ENCODE measurements at regions of chr15 and their contacts with region 1.

Region 1: GRCh38 chr15:26615188-26615926 is 157.5 kb downstream of the GABRB3 start:
- DNase-seq: no peak
- H3K4me3 ChIP-seq: no peak overlapping the region
- H3K27ac ChIP-seq: no peak overlapping the region
- H3K4me1 ChIP-seq: no peaks in the 10 kb centered on the region
- H3K27me3 ChIP-seq: no peaks in the 10 kb centered on the region
- CTCF ChIP-seq: no peak
- POLR2A ChIP-seq: no peak

Region 2: GRCh38 chr15:26340376-26340775 is 275.0 kb before region 1 on chr15:
- intact Hi-C with region 1: no loop called
- DNase-seq: no peak
- H3K4me3 ChIP-seq: no peak overlapping the region
- H3K27ac ChIP-seq: no peak overlapping the region
- H3K4me1 ChIP-seq: no peaks in the 10 kb centered on the region
- H3K27me3 ChIP-seq: no peaks in the 10 kb centered on the region
- CTCF ChIP-seq: no peak
- POLR2A ChIP-seq: no peak

Region 3: GRCh38 chr15:26551473-26551872 is 63.9 kb before region 1 on chr15:
- intact Hi-C with region 1: loop called (anchors 10 kb)
- DNase-seq: no peak
- H3K4me3 ChIP-seq: no peak overlapping the region
- H3K27ac ChIP-seq: no peak overlapping the region
- H3K4me1 ChIP-seq: no peaks in the 10 kb centered on the region
- H3K27me3 ChIP-seq: no peaks in the 10 kb centered on the region
- CTCF ChIP-seq: no peak
- POLR2A ChIP-seq: no peak

Region 4: DNA sequence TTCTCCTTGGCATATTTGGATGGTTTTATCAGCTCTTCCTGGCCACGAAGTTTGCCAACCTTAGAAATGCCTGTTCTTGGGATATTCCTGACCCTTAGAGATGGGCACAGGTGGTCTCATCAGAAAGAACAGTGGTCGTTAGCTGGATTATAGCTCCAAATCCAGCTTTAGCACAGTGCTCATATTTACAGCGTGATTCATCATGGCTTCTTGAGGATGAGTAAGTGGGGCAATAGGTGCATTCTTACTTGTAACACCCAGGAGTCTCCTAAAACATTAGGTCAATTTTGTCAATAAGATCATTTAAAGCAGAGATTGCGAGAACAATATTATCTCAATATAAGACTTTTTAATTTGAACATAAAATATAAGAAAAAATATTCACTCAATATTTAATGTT is 34.4 kb before region 1 on chr15:
- intact Hi-C with region 1: no loop called
- DNase-seq: no peak
- H3K4me3 ChIP-seq: no peak overlapping the region
- H3K27ac ChIP-seq: no peak overlapping the region
- H3K4me1 ChIP-seq: no peaks in the 10 kb centered on the region
- H3K27me3 ChIP-seq: no peaks in the 10 kb centered on the region
- CTCF ChIP-seq: no peak
- POLR2A ChIP-seq: no peak